Left ventricle myocardium superior (tissue), 1 donor: ENCODE measurements at regions of chr6 and their contacts with region 1.

Region 1: DNA sequence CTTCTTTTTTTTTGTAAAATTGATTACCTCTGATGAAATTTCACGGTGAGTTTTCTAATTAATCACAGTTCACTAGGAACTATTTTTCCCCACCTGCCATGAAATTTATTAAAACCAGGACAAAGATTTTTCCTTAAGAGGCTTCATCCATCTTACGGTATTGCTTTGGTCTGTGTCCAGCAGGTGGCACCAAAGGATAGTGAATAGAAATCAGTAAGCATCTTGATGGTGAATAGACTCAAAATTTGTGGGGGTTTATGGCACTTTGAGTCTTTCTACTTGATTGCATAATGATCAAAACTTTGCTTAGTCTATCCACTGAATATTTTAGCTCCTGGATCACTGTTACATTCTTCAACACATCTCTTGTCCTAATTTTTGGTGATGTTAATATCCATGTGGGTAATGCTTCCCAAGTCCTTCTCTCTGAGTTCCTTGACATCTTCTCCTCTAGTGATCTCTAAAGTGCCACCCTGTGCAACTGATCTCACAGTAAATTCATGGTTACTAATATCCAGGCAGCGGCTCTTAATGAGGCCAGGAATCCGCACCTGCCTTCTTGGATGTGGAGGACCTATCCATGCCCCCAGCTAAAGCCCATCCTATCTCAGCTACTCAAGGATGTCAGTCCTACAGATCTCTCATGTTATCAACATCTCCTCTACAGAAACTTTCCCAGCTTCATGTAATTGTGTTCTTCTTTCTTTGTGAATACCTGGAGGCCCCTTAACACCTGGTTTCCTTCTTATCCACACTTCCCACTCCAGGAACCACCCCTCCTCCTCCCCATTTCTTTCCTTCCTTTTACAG is 54.5 kb downstream of the STMND1 start:
- DNase-seq: peak; percentile 33
- ATAC-seq: peak; percentile 56

Region 2: GRCh38 chr6:17218023-17218748 is 61.9 kb after region 1 on chr6:
- intact Hi-C with region 1: no loop called
- DNase-seq: no peak
- ATAC-seq: peak; percentile 78

Region 3: GRCh38 chr6:17584241-17584803 is 428.0 kb after region 1 on chr6:
- intact Hi-C with region 1: loop called (anchors 5 kb)
- DNase-seq: no peak
- ATAC-seq: peak; percentile 81

Region 4: DNA sequence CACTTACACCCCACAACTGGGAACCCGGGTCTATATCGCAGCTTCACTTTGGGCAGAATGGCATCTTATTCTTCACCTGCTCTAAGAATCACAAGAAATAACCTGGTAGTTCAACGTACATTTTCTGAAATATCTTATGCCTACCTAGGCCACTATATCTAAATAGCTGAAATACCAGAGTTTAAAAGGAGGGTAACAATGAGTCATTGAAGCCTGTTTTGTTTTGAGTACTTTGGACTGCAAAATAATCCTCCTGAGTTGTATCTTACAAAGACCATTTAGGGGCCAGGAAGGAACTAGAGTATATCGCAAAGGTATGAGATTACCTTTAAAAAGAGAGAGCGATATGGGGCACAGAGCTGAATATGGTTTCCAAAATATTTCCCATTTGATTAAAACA is 647.1 kb after region 1 on chr6:
- intact Hi-C with region 1: loop called (anchors 5 kb)
- DNase-seq: no peak
- ATAC-seq: no peak

Region 5: GRCh38 chr6:17962436-17963031 is 806.2 kb after region 1 on chr6:
- intact Hi-C with region 1: no loop called
- DNase-seq: peak; percentile 86
- ATAC-seq: peak; percentile 98